Activated B cell treated with CpG ODN at 0.5 μM for 24 hours (primary cell): ENCODE measurements at regions of chr15 and their contacts with region 1.

Region 1: DNA sequence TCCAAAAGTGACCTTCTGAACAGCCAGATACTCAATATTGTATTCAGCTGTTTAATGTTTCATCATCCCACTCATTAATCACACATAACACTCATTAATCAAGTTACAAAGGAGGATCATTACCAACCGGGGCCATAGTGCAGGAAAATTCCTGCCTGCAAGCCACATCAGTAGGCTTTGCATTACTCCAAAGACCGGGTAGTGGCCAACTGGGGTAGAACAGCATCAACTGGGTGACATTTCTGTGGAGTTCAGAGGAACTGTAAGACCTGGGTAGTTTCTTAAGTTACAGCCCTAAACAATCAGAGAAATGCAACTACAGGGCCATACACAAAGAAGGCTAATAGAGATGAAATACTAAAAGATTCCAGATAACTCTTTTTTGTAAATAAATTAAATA is 253.1 kb downstream of the WDR72 start:
- DNase-seq: no peak
- ATAC-seq: no peak
- H3K4me3 Mint-ChIP-seq: no peak overlapping the region
- H3K27ac Mint-ChIP-seq: no peak overlapping the region
- H3K4me1 Mint-ChIP-seq: no peaks in the 10 kb centered on the region
- H3K27me3 Mint-ChIP-seq: no peaks in the 10 kb centered on the region
- CTCF ChIP-seq: no peak

Region 2: GRCh38 chr15:53559364-53560277 is 53.3 kb after region 1 on chr15:
- CTCF ChIA-PET with region 1: no interaction called
- POLR2A ChIA-PET with region 1: no interaction called
- intact Hi-C with region 1: loop called (anchors 10 kb)
- DNase-seq: no peak
- ATAC-seq: no peak
- H3K4me3 Mint-ChIP-seq: no peak overlapping the region
- H3K27ac Mint-ChIP-seq: no peak overlapping the region
- H3K4me1 Mint-ChIP-seq: no peaks in the 10 kb centered on the region
- H3K27me3 Mint-ChIP-seq: no peaks in the 10 kb centered on the region
- CTCF ChIP-seq: no peak